ENCODE measurements at regions of chr1 and their contacts with region 1.

Region 1: GRCh38 chr1:119367427-119368124 is 1.0 kb upstream of the HAO2 start:
- DNase-seq: no peak
- H3K4me3 ChIP-seq: no peak overlapping the region
- H3K27ac ChIP-seq: no peak overlapping the region
- H3K4me1 ChIP-seq: no peaks in the 10 kb centered on the region
- H3K27me3 ChIP-seq: no peaks in the 10 kb centered on the region
- CTCF ChIP-seq: peak; percentile 81 to 99 (median 87)
- POLR2A ChIP-seq: no peak

Region 2: DNA sequence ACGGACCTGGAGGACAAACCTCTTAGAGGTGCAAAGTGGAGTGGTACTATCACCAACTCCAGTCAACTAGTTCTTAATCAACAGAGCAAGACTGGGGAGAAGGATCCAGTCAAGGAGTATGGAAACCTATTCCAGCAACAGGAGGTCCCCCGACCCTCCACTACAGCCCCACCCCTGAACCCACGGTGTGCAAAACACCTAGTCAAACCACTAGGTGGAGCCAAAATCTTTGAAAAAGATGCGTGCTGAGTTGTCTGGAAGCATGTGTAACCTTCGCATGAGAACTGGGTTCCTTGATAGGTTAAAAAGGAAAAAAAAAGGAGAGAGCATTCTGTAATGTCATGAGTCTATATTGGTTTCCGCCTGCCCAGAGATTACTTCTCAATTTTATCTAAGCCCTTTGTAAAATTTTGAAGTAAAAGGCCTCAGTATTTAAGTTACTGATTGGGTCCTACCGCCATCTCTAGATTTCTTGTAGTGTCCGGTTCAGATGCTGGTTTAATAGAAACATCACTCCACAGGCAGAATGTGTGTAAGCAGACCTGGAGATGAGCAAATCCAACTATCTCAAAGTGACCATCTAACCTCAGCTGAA is 80.9 kb before region 1 on chr1:
- intact Hi-C with region 1: loop called (anchors 5 kb)
- DNase-seq: peak; percentile 28 to 29
- H3K4me3 ChIP-seq: no peak overlapping the region
- H3K27ac ChIP-seq: no peak overlapping the region
- H3K4me1 ChIP-seq: no peaks in the 10 kb centered on the region
- H3K27me3 ChIP-seq: no peaks in the 10 kb centered on the region
- CTCF ChIP-seq: peak; percentile 33 to 77 (median 54)
- POLR2A ChIP-seq: no peak